ENCODE measurements at regions of chr1 and their contacts with region 1.

Region 1: GRCh38 chr1:89483010-89483756 is 41.4 kb upstream of the LRRC8B start:
- DNase-seq: peak; percentile 89
- H3K4me3 ChIP-seq: no peak overlapping the region
- H3K4me1 ChIP-seq: no peaks in the 10 kb centered on the region; the same call in 1 of the 2 replicates
- H3K27me3 ChIP-seq: no peaks in the 10 kb centered on the region

Region 2: GRCh38 chr1:89757532-89757931 is 274.3 kb after region 1 on chr1:
- in situ Hi-C with region 1: loop called (anchors 10 kb)
- DNase-seq: no peak
- H3K4me3 ChIP-seq: no peak overlapping the region
- H3K4me1 ChIP-seq: no peaks in the 10 kb centered on the region
- H3K27me3 ChIP-seq: peaks cover 8% of the 10 kb centered on the region

Region 3: DNA sequence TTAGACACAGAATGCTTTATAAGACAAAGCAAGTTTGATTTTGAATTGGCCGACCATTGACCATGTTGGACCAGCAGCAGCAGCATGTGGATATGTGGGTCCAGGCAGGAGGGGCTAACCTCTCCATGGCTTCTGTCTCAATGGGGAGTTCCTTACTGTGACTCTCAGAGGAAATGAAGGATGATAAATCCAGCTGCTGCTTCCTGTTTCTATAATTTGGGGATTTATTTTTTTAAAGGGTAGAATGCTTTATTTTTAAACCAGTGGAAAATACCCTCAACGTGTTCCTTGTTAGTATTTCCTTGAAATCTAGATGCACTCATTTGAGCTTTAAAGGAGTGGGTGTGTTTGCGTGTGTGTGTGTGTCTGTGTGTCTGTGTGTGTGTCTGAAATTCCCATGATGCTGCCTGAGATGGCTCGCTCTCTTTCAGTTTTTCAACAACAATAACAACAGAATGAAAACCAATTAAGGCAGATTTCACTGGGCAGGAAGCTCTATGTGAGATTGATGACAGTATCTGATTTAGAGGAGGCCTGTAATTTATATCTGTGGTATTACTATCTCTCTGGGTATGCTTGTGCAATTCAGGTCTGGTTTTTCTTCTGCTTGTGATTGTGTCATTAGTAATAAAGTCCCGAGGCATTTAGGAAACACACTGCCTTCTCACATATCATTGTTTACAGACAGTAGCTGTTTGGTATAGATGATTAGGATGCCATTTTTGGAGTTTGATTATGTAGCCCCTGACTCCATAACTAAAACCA is 425.7 kb after region 1 on chr1:
- in situ Hi-C with region 1: no loop called
- DNase-seq: no peak
- H3K4me3 ChIP-seq: no peak overlapping the region
- H3K4me1 ChIP-seq: peaks cover 48% of the 10 kb centered on the region
- H3K27me3 ChIP-seq: no peaks in the 10 kb centered on the region